GM13977 (cell line): ENCODE measurements at regions of chr1 and their contacts with region 1.

Region 1: GRCh38 chr1:147172168-147172992 is at the start of gene PRKAB2:
- DNase-seq: peak; percentile 95
- CTCF ChIP-seq: peak; percentile 96

Region 2: GRCh38 chr1:147242439-147243227 is 70.3 kb after region 1 on chr1 and contains the start of gene CHD1L:
- in situ Hi-C with region 1: loop called (anchors 10 kb)
- DNase-seq: peak; percentile 94
- CTCF ChIP-seq: peak; percentile 97